Endothelial cell of umbilical vein (primary cell): ENCODE measurements at regions of chr11 and their contacts with region 1.

Region 1: DNA sequence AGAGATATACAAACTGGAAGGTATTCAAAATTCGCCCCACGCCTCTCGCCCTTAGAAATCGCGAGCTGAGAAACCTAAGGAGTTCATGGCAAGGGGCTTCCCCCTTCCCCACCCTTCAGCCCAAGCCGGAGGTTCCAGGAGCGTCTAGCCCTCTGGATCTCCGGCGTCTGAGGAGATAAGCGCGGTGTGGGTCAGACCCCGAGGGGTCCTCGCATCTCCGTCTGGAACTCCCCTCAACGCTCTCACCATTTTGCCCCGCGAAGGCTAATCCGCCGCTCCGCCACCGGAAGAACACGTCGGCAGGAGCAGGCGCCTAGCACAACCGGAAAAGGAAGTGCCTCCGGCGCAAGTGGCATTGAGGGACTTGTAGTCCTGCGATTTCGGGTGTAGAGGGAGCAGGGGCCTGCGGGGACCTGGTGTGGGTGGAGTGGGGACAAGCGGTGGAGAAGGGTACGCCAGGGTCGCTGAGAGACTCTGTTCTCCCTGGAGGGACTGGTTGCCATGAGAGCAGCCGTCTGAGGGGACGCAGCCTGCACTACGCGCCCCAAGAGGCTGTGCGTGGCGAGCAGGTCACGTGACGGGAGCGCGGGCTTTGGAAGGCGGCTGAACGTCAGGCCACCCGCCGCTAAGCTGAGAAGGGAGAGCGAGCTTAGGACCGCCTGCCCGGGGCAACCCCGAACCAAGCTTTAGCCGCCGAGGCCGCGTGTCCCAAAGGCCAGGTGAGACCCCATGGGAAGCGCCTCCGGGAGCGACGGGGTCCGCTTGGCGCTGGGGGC is at the starts of genes FEN1 and TMEM258:
- DNase-seq: peak; percentile 98
- H3K4me3 ChIP-seq: peak within 1 kb of the TSS; percentile 70 to 91 (median 83)
- H3K27ac ChIP-seq: peak within 1 kb of the TSS; percentile 99
- H3K4me1 ChIP-seq: peaks cover 18% of the 10 kb centered on the region
- H3K27me3 ChIP-seq: no peaks in the 10 kb centered on the region
- CTCF ChIP-seq: peak in 1 of 2 donors; percentile 3
- POLR2A ChIP-seq: peak; percentile 90
- total RNA-seq, gene FEN1: 57.9 and 60.5 TPM in 2 replicates
- total RNA-seq, gene TMEM258: 139 and 140 TPM in 2 replicates

Region 2: GRCh38 chr11:61776551-61777075 is 15.9 kb before region 1 on chr11:
- CTCF ChIA-PET with region 1: interaction called, 10 read pairs
- POLR2A ChIA-PET with region 1: no interaction called
- dilution Hi-C with region 1: no loop called
- intact Hi-C with region 1: no loop called
- DNase-seq: peak; percentile 50
- H3K4me3 ChIP-seq: no peak overlapping the region
- H3K27ac ChIP-seq: no peak overlapping the region
- H3K4me1 ChIP-seq: peaks cover 6% of the 10 kb centered on the region
- H3K27me3 ChIP-seq: no peaks in the 10 kb centered on the region
- CTCF ChIP-seq: peak; percentile 72 to 86
- POLR2A ChIP-seq: no peak

Region 3: GRCh38 chr11:61816736-61817455 is 24.4 kb after region 1 on chr11 and contains the start of gene FADS1:
- CTCF ChIA-PET with region 1: interaction called, 56 read pairs
- POLR2A ChIA-PET with region 1: interaction called, 13 read pairs
- dilution Hi-C with region 1: no loop called
- intact Hi-C with region 1: loop called (anchors 1 kb)
- DNase-seq: peak; percentile 97
- H3K4me3 ChIP-seq: peak within 1 kb of the TSS; percentile 56 to 86 (median 62)
- H3K27ac ChIP-seq: peak within 1 kb of the TSS; percentile 86
- H3K4me1 ChIP-seq: peaks cover 19% of the 10 kb centered on the region
- H3K27me3 ChIP-seq: no peaks in the 10 kb centered on the region
- CTCF ChIP-seq: peak; percentile 79 to 89
- POLR2A ChIP-seq: peak; percentile 50
- total RNA-seq, gene FADS1: 109 and 110 TPM in 2 replicates

Region 4: GRCh38 chr11:61841636-61842527 is 49.4 kb after region 1 on chr11:
- CTCF ChIA-PET with region 1: interaction called, 38 read pairs
- POLR2A ChIA-PET with region 1: interaction called, 4 read pairs
- dilution Hi-C with region 1: no loop called
- intact Hi-C with region 1: loop called (anchors 2 kb)
- DNase-seq: no peak
- H3K4me3 ChIP-seq: no peak overlapping the region
- H3K27ac ChIP-seq: no peak overlapping the region
- H3K4me1 ChIP-seq: no peaks in the 10 kb centered on the region
- H3K27me3 ChIP-seq: no peaks in the 10 kb centered on the region
- CTCF ChIP-seq: no peak
- POLR2A ChIP-seq: no peak

Region 5: GRCh38 chr11:61899146-61899841 is 106.8 kb after region 1 on chr11:
- CTCF ChIA-PET with region 1: interaction called, 64 read pairs
- POLR2A ChIA-PET with region 1: no interaction called
- dilution Hi-C with region 1: no loop called
- intact Hi-C with region 1: loop called (anchors 1 kb)
- DNase-seq: peak; percentile 80
- H3K4me3 ChIP-seq: no peak overlapping the region
- H3K27ac ChIP-seq: no peak overlapping the region
- H3K4me1 ChIP-seq: no peaks in the 10 kb centered on the region
- H3K27me3 ChIP-seq: no peaks in the 10 kb centered on the region
- CTCF ChIP-seq: peak; percentile 100
- POLR2A ChIP-seq: no peak

Region 6: DNA sequence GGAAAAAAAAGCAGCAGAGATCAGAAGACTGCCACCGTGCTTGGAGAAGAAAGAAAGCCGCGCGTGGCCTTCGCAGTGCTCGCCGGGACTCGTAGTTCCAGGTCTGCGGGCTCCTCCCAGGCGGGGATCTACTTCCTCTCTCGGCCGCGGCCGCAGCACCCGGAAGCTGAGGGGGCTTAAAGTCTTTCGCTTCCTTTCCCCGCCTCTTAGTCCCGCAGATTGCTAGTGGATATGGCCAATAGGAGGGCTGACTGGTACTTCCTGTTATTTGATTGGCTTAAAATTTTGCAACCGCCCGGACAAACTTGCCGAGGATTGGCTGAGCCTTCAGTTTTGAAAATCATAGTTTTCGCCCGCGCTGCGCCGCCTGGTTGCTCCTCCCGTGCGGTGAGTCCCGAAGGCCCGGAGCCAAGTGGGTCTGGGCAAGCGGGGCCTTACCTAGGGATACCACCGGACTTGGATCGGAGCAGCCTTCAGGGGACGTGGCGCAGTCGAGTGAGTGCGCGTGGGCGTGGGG is 331.2 kb after region 1 on chr11 and contains the start of gene INCENP:
- CTCF ChIA-PET with region 1: no interaction called
- POLR2A ChIA-PET with region 1: no interaction called
- dilution Hi-C with region 1: no loop called
- intact Hi-C with region 1: loop called (anchors 5 kb)
- DNase-seq: peak; percentile 100
- H3K4me3 ChIP-seq: peak within 1 kb of the TSS; percentile 53 to 84 (median 69)
- H3K27ac ChIP-seq: peak within 1 kb of the TSS; percentile 19
- H3K4me1 ChIP-seq: peaks cover 19% of the 10 kb centered on the region
- H3K27me3 ChIP-seq: peaks cover 0 to 2% of the 10 kb centered on the region in 2 experiments
- CTCF ChIP-seq: no peak
- POLR2A ChIP-seq: peak; percentile 67
- total RNA-seq, gene INCENP: 73.6 and 86.8 TPM in 2 replicates